KBM-7 (cell line): ENCODE measurements at regions of chr17 and their contacts with region 1.

Region 1: GRCh38 chr17:82592767-82593589 is 55.3 kb downstream of the WDR45B start:
- DNase-seq: peak; percentile 88

Region 2: DNA sequence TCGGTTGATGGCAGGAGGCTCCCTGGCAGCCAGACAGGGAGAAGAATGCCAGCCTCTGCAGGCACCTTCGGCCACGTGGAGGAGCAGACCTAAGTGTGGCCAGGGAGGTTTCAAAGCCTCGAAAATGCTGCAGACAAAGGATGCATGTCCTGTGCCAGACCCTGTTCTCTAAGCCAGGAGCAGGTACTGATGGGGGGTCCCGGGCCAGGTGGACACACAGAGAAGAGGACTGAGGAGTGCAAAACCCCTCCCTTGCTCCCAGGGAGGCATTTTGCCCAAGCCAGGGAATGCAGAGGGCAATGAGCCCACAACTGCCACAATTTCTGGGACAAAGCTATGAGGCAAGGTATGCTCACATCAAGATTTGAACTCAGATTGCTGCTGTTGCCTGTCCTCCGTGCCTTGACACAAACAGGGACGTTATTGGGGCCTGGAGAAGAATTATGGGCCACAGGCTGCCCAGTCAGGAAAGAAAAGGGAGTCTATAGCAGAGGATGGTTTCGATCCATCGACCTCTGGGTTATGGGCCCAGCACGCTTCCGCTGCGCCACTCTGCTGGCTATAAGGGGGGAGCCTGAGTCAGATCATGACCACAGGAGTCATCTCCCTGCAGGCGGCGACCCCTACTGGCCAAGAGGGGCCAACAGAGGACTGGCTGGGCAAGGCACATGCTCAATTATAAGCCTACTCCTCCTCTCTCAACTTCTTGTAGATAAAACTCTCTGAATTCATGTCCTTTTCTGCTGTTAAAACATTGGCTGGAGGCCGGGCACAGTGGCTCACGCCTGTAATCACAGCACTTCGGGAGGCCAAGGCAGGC is 98.5 kb before region 1 on chr17:
- in situ Hi-C with region 1: loop called (anchors 25 kb)
- DNase-seq: peak; percentile 95